AG04449 (cell line): ENCODE measurements at regions of chr1 and their contacts with region 1.

Region 1: GRCh38 chr1:27365372-27366112 is 1.2 kb downstream of the MAP3K6 start:
- DNase-seq: peak; percentile 42
- H3K4me3 ChIP-seq: peak overlapping the region; percentile 63
- CTCF ChIP-seq: no peak

Region 2: DNA sequence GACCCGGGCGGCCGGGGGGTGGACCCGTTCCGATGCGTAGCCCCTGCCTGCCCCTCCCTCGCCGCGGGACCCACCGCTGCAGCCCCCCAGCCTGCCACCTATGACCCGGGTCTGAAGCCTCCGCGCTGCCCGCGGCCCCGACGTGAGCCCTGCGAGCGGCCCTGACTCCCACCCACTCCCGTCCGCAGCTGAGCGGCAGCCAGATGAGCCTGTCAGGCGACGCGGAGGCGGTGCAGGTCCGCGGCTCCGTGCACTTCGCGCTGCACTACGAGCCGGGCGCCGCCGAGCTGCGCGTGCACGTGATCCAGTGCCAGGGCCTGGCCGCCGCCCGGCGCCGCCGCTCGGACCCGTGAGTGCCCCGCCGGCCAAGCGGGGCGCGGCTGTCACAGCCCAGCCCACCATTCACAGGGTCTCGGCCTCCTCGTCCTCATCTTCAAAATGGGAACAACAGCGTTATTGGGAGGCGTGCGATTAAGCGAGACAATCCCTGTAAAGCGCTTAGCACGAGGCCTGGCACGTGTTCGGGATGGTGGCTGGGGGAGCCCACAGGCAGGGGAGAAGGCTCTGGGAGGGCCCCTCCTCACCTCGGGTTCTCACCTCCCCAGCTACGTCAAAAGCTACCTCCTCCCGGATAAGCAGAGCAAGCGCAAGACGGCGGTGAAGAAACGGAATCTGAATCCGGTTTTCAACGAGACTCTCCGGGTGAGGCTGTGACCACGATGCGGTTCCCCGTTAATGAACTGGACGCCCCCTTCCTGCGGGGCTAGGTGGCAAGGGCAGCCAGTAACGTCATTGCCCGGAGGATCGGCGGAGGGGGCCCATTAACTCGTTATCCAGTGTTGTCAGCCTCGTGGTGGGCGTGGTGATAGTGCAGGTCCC is 15.5 kb before region 1 on chr1:
- CTCF ChIA-PET with region 1: interaction called, 187 read pairs
- POLR2A ChIA-PET with region 1: interaction called, 9 read pairs
- DNase-seq: no peak
- H3K4me3 ChIP-seq: peak overlapping the region; percentile 49
- CTCF ChIP-seq: no peak